BJ (cell line): ENCODE measurements at regions of chr1 and their contacts with region 1.

Region 1: GRCh38 chr1:229434641-229435051 is 752 bp upstream of the ACTA1 start:
- DNase-seq: no peak
- H3K4me3 ChIP-seq: no peak overlapping the region
- H3K27me3 ChIP-seq: peaks cover 49% of the 10 kb centered on the region
- CTCF ChIP-seq: no peak

Region 2: GRCh38 chr1:229363723-229364122 is 70.9 kb before region 1 on chr1:
- CTCF ChIA-PET with region 1: no interaction called
- POLR2A ChIA-PET with region 1: no interaction called
- DNase-seq: no peak
- H3K4me3 ChIP-seq: no peak overlapping the region
- H3K27me3 ChIP-seq: peaks cover 1% of the 10 kb centered on the region; the same call in 1 of the 2 replicates
- CTCF ChIP-seq: no peak

Region 3: GRCh38 chr1:229407204-229408026 is 27.2 kb before region 1 on chr1:
- CTCF ChIA-PET with region 1: interaction called, 3 read pairs
- POLR2A ChIA-PET with region 1: interaction called, 24 read pairs
- DNase-seq: no peak
- H3K4me3 ChIP-seq: peak overlapping the region; percentile 12; the same call in 1 of the 2 replicates
- H3K27me3 ChIP-seq: peaks cover 13% of the 10 kb centered on the region
- CTCF ChIP-seq: no peak